ENCODE measurements at regions of chr14 and their contacts with region 1.

Region 1: DNA sequence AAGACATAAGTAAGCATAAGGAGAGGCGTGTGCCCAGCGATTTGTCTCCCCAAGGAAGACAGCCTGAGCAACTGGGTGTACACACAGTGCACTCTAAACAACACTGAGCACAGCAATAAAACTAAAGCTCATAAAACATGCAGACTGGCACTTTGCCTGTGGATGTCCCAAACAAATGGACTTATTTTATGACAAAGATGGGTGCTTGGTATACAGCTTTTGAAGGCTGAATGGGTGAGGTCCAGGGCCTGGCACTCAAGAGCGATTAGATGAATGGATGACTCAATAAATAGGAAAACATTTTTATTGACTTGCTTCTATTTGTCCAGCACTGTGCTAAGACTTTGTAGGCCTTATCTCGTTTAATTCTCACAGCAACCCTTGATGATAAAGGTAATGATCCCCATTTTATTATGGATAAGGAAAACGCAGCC is 28.5 kb downstream of the LGMN start:
- ATAC-seq: peak in 3 of 8 experiments; percentile 38 to 83 (median 71)
- H3K4me3 ChIP-seq: no peak overlapping the region
- H3K27ac ChIP-seq: no peak overlapping the region
- H3K4me1 ChIP-seq: no peaks in the 10 kb centered on the region

Region 2: GRCh38 chr14:92625213-92625612 is 94.7 kb before region 1 on chr14:
- in situ Hi-C with region 1: no loop called
- ATAC-seq: peak in 2 of 8 experiments; percentile 54 to 59
- H3K4me3 ChIP-seq: no peak overlapping the region
- H3K27ac ChIP-seq: no peak overlapping the region
- H3K4me1 ChIP-seq: no peaks in the 10 kb centered on the region

Region 3: DNA sequence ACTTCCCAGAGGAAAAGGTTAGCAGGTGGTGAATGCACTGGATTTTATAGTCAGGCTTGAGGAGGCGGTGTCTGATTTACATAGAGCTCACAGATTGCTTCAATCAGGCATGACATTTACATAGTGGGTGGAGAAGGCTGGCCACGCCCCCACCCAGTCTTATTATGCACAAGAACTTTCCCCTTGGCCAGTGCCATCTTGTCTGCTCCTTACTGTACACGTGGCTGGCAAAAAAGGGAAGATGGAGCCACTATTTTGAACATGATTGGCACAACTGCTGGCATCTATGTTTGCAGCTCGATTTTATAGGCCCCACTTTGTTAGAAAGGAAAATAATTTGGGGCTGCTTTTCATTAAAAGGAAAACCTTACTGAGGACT is 39.4 kb after region 1 on chr14:
- in situ Hi-C with region 1: no loop called
- ATAC-seq: peak; percentile 68 to 99 (median 83)
- H3K4me3 ChIP-seq: no peak overlapping the region
- H3K27ac ChIP-seq: no peak overlapping the region
- H3K4me1 ChIP-seq: peaks cover 0 to 2% of the 10 kb centered on the region in 2 donors

Region 4: GRCh38 chr14:92783816-92784431 is 64.0 kb after region 1 on chr14:
- in situ Hi-C with region 1: loop called in 1 of 9 experiments (anchors 10 kb)
- ATAC-seq: peak; percentile 13 to 90 (median 78)
- H3K4me3 ChIP-seq: no peak overlapping the region
- H3K27ac ChIP-seq: no peak overlapping the region
- H3K4me1 ChIP-seq: no peaks in the 10 kb centered on the region

Region 5: DNA sequence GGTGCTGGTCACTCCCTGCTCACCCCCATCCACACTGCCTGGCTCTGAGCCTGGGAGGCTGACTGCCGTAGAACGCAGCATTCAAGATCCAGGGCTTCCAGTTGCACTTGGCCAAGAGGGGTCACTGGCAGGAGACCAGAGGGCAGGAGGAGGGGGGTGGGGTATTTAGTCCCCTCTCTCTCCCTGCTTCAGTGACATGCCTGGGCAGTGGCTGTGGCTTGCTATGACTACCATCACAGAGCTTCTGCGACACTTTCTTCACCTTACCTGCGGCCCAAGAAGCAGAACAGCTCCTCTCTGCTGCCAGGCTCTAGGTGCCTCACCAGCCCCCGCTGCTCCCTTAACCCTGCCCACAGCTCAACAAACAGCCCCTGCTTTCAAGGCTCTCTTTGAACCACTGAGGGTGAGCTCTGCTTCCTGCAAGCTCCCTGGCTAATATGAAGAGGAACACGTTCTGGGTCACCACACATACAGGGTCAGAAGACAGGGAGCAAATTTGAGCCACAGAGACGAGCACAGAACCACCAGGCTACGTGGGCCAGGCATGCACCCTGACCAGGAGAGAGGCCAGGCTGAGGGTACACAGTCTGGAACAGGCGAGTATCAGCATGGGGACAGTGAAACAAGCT is 340.1 kb after region 1 on chr14:
- in situ Hi-C with region 1: no loop called
- ATAC-seq: peak in 1 of 8 experiments; percentile 16
- H3K4me3 ChIP-seq: no peak overlapping the region
- H3K27ac ChIP-seq: no peak overlapping the region
- H3K4me1 ChIP-seq: peaks cover 27 to 28% of the 10 kb centered on the region in 2 donors